Mucosa of descending colon (tissue), 3 donors: ENCODE measurements at regions of chr9 and their contacts with region 1.

Region 1: GRCh38 chr9:26946753-26947727 is at the start of gene PLAA:
- DNase-seq: peak; percentile 91 to 95 (median 94)
- ATAC-seq: peak; percentile 100
- H3K4me3 ChIP-seq: peak within 1 kb of the TSS; percentile 76
- H3K4me1 ChIP-seq: peaks cover 24% of the 10 kb centered on the region
- CTCF ChIP-seq: no peak
- total RNA-seq, gene PLAA: 24.8 to 28.4 (median 27.8) TPM

Region 2: DNA sequence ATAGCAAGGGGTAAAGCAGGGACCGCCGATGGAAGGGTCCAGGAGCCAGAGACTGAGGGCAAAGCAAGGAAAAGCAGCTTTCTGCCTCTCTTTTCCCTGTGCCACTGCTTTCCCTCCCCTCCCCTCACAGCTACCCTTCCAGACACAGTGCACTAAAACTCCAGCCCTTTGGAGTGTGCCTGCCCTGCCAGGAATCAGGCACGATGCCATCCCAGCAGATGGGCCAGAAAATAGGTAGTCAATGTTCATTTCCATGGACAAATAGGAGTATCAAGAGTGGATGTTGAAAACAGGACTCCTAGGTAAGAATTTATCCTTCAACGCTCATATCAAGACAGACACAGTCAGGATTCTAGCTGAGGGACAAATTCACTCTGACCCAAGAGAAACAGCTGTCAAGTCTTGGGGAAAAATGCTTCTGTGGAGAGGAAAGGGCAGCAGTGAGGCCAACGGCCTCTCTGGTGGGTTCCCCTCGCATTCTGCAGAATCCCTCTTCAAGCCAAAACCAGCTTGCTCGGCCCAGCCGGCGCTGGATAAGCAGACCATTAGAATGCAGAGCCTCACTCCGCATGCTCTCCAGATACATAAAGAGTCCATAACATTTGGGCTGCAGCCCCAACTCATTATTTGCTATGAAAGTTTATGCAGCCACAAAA is 192.4 kb before region 1 on chr9:
- intact Hi-C with region 1: no loop called
- DNase-seq: no peak
- ATAC-seq: no peak
- H3K4me3 ChIP-seq: no peak overlapping the region
- H3K4me1 ChIP-seq: no peaks in the 10 kb centered on the region
- CTCF ChIP-seq: no peak

Region 3: DNA sequence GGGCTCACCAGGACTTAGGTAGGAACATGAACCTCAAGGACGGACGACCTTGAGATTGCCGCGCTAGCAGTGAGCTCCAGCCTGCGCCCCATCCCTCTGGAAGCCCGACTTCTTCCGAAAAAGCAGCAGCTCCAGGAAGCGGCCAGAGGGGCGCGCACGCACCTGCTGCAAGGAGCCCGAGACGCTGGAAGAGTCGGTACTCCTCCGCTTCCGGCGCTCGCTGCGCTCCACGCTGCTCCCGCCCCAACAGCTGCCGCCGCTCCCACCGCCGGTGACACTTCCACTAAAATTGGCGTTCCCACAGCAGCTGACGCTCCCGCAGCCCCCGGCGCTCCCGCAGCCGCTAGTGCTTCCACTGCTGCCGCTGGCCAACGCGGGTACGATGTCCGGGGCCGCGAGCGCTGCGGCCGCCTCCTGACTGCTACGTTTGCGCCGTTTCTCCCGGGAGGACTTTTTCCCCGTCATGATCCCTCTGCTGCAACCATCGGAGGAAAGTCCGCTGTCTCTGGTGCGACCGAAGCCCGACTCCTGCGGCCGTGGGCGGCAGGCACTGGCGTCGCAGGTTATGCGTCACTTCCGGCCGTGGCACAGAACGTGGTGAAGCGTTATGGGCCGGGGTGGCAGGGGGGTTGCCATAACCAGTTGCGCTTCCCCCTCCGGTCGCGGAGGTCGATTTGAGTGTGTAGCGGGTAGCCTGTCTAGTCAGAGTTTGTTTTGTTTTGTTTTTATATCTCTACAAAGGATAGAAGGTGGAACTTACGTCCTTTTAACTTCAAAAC is 54.6 kb before region 1 on chr9 and contains the start of gene CAAP1:
- intact Hi-C with region 1: loop called in 1 of 2 experiments (anchors 5 kb)
- DNase-seq: peak; percentile 95 to 97 (median 96)
- ATAC-seq: peak; percentile 96
- H3K4me3 ChIP-seq: peak within 1 kb of the TSS; percentile 66
- H3K4me1 ChIP-seq: peaks cover 13% of the 10 kb centered on the region
- CTCF ChIP-seq: no peak
- total RNA-seq, gene CAAP1: 22.2 to 34.5 (median 23.7) TPM